CD8-positive, alpha-beta memory T cell (primary cell): ENCODE measurements at regions of chr1 and their contacts with region 1.

Region 1: GRCh38 chr1:156129706-156130581 is 15.4 kb downstream of the LMNA start:
- DNase-seq: peak; percentile 57 to 77 (median 71)
- H3K4me3 ChIP-seq: no peak overlapping the region
- H3K4me3 Mint-ChIP-seq: peak overlapping the region in 3 of 7 donors; percentile 48 to 72 (median 59)
- H3K27ac ChIP-seq: no peak overlapping the region
- H3K27ac Mint-ChIP-seq: peak overlapping the region in 7 of 8 donors; percentile 68 to 97 (median 90)
- H3K4me1 ChIP-seq: peaks cover 55% of the 10 kb centered on the region
- H3K4me1 Mint-ChIP-seq: peaks cover 42 to 54% (median 53%) of the 10 kb centered on the region in 3 donors
- H3K27me3 ChIP-seq: no peaks in the 10 kb centered on the region
- H3K27me3 Mint-ChIP-seq: peaks cover 0 to 3% of the 10 kb centered on the region in 2 donors

Region 2: DNA sequence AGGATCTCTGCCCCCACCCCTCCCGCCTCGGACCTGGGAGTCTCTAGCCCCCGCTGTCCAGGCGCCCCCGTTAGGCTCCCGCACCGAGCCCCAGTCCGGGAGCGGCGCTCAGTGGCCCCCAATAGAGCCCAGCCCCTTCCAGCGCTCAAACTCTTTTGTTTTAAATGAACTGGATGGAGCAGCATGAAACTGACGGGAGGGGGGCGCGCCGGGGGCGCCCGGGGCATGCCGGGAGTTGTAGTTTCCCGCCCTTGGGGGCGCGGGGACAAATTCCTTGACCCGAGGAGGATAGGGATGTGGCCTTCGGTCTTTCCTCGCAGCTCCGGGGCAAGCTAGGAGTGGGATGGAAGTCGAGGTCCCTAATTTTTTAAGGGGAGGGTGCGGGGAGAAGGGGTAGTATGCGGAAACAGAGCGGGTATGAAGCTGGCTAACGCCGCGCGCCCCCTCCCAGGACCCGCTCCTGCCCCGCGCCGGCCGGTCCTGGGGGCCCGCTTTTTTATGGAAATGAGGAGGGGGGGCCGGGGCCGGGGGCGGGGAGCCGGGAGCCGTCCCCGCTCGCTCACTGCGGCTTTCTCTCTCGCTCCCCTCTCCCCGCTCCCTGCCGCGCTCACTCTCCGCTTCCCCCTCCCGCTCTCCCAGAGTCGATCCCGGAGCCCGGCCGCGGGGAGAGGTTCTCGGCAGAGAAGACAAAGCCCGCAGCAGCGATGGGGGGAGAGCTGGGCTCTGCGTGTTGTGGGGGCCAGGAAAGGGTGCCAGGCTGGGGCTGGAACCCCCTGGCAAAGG is 47.4 kb before region 1 on chr1 and contains the start of gene MEX3A:
- CTCF ChIA-PET with region 1: interaction called, 10 read pairs
- POLR2A ChIA-PET with region 1: no interaction called
- DNase-seq: peak; percentile 46 to 73 (median 56)
- H3K4me3 ChIP-seq: peak within 1 kb of the TSS; percentile 75
- H3K4me3 Mint-ChIP-seq: peak within 1 kb of the TSS; percentile 78 to 95 (median 85)
- H3K27ac ChIP-seq: peak within 1 kb of the TSS; percentile 24
- H3K27ac Mint-ChIP-seq: peak within 1 kb of the TSS in 5 of 8 donors; percentile 29 to 86 (median 82)
- H3K4me1 ChIP-seq: peaks cover 6% of the 10 kb centered on the region
- H3K4me1 Mint-ChIP-seq: peaks cover 6 to 16% (median 8%) of the 10 kb centered on the region in 3 donors
- H3K27me3 ChIP-seq: peaks cover 19% of the 10 kb centered on the region
- H3K27me3 Mint-ChIP-seq: peaks cover 19 to 40% of the 10 kb centered on the region in 2 donors
- total RNA-seq, gene MEX3A: 0.24 to 1.0 TPM

Region 3: DNA sequence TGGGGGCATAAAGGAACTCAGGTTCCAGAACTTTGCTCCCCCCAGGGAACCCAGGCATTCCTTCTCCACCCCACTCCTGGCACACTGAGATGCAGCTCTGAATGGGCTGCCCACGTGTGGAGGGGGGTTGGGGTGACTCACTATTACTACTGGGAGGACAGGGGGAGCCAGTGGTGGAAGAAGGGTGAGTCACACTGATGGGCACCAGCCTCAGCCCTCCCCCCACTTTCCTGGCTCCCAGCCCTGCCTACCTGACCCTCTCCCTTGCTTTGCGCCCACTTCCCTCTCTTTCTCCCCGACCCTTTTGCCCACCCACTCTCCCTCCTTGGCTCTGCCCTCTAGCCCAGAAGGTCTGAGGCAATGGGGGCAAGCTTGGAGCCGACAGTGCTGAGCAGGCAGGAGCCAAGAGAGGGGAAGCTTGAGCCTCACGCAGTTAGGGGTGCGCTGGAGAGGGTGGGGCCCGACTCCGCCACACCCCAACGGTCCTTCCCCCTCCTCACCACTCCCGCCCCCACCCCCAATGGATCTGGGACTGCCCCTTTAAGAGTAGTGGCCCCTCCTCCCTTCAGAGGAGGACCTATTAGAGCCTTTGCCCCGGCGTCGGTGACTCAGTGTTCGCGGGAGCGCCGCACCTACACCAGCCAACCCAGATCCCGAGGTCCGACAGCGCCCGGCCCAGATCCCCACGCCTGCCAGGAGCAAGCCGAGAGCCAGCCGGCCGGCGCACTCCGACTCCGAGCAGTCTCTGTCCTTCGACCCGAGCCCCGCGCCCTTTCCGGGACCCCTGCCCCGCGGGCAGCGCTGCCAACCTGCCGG is 15.6 kb before region 1 on chr1 and contains the start of gene LMNA:
- CTCF ChIA-PET with region 1: interaction called, 702 read pairs
- POLR2A ChIA-PET with region 1: interaction called, 5 read pairs
- DNase-seq: peak; percentile 34 to 91 (median 73)
- H3K4me3 ChIP-seq: peak within 1 kb of the TSS; percentile 77
- H3K4me3 Mint-ChIP-seq: peak within 1 kb of the TSS; percentile 90 to 98 (median 93)
- H3K27ac ChIP-seq: peak within 1 kb of the TSS; percentile 93
- H3K27ac Mint-ChIP-seq: peak within 1 kb of the TSS; percentile 81 to 100 (median 97)
- H3K4me1 ChIP-seq: peaks cover 17% of the 10 kb centered on the region
- H3K4me1 Mint-ChIP-seq: peaks cover 24 to 48% (median 32%) of the 10 kb centered on the region in 3 donors
- H3K27me3 ChIP-seq: peaks cover 3% of the 10 kb centered on the region
- H3K27me3 Mint-ChIP-seq: peaks cover 0 to 8% of the 10 kb centered on the region in 2 donors
- total RNA-seq, gene LMNA: 325 to 335 TPM

Region 4: GRCh38 chr1:156437037-156437867 is 307.3 kb after region 1 on chr1:
- CTCF ChIA-PET with region 1: no interaction called
- POLR2A ChIA-PET with region 1: interaction called, 10 read pairs
- DNase-seq: no peak
- H3K4me3 ChIP-seq: no peak overlapping the region
- H3K4me3 Mint-ChIP-seq: peak overlapping the region in 5 of 7 donors; percentile 2 to 47 (median 15)
- H3K27ac ChIP-seq: no peak overlapping the region
- H3K27ac Mint-ChIP-seq: no peak overlapping the region
- H3K4me1 ChIP-seq: peaks cover 27% of the 10 kb centered on the region
- H3K4me1 Mint-ChIP-seq: peaks cover 17 to 33% (median 30%) of the 10 kb centered on the region in 3 donors
- H3K27me3 ChIP-seq: peaks cover 84% of the 10 kb centered on the region
- H3K27me3 Mint-ChIP-seq: peaks cover 76 to 89% of the 10 kb centered on the region in 2 donors